ENCODE measurements at regions of chr10 and their contacts with region 1.

Region 1: GRCh38 chr10:124741281-124741921 is 2.8 kb downstream of the FAM53B start:
- DNase-seq: peak; percentile 66 to 87 (median 74)
- ATAC-seq: peak; percentile 58
- H3K4me3 ChIP-seq: peak overlapping the region; percentile 83
- H3K4me3 Mint-ChIP-seq: peak overlapping the region; percentile 99
- H3K27ac ChIP-seq: peak overlapping the region; percentile 51 to 60
- H3K27ac Mint-ChIP-seq: peak overlapping the region; percentile 88
- H3K4me1 ChIP-seq: peaks cover 69% of the 10 kb centered on the region
- H3K4me1 Mint-ChIP-seq: peaks cover 84% of the 10 kb centered on the region
- H3K27me3 ChIP-seq: no peaks in the 10 kb centered on the region
- H3K27me3 Mint-ChIP-seq: no peaks in the 10 kb centered on the region
- CTCF ChIP-seq: peak; percentile 93

Region 2: DNA sequence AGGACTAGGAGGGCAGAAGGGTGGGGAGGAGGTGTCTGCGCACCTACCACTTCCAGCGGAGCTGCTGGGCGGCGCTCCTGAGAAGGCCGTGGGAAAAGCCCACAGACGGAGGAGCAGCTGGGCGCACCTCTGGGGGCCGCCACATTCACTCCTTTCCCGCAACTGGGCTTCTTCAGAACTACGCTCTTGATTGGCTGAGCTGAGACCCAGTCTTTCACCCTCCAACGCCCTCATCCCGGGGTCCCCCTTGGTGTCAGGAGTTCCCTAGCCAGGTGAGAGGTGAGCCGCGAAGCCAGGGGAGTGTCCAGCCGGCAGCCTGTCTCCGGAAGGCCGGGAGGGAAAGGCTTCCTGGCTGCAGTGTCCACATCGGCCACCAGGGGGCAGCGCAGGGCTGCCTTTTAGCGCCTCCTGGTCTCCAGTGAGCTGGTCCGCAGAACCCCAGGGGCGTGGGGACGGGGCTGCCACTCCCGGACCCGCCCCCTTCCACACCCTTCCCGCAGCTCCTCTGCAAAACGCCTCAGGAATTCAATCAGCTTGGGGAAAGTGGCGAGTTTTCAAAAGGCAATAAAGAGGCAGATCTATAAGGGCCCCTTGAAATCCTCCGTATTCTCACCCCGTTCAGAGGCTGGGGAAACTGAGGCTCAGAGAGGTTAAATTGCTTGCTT is 746.9 kb before region 1 on chr10:
- CTCF ChIA-PET with region 1: no interaction called
- POLR2A ChIA-PET with region 1: no interaction called
- intact Hi-C with region 1: loop called (anchors 5 to 10 kb)
- DNase-seq: peak; percentile 62 to 88 (median 74)
- ATAC-seq: peak; percentile 87
- H3K4me3 ChIP-seq: peak overlapping the region; percentile 6
- H3K4me3 Mint-ChIP-seq: peak overlapping the region; percentile 38
- H3K27ac ChIP-seq: no peak overlapping the region
- H3K27ac Mint-ChIP-seq: no peak overlapping the region
- H3K4me1 ChIP-seq: peaks cover 17% of the 10 kb centered on the region
- H3K4me1 Mint-ChIP-seq: peaks cover 16% of the 10 kb centered on the region
- H3K27me3 ChIP-seq: peaks cover 27 to 49% of the 10 kb centered on the region in 2 experiments
- H3K27me3 Mint-ChIP-seq: peaks cover 82% of the 10 kb centered on the region
- CTCF ChIP-seq: peak; percentile 88

Region 3: GRCh38 chr10:124180947-124181549 is 560.4 kb before region 1 on chr10:
- CTCF ChIA-PET with region 1: no interaction called
- POLR2A ChIA-PET with region 1: no interaction called
- intact Hi-C with region 1: no loop called
- DNase-seq: peak in 1 of 14 experiments; percentile 25
- ATAC-seq: no peak
- H3K4me3 ChIP-seq: no peak overlapping the region
- H3K4me3 Mint-ChIP-seq: no peak overlapping the region
- H3K27ac ChIP-seq: no peak overlapping the region
- H3K27ac Mint-ChIP-seq: no peak overlapping the region
- H3K4me1 ChIP-seq: no peaks in the 10 kb centered on the region
- H3K4me1 Mint-ChIP-seq: peaks cover 1% of the 10 kb centered on the region
- H3K27me3 ChIP-seq: no peaks in the 10 kb centered on the region
- H3K27me3 Mint-ChIP-seq: no peaks in the 10 kb centered on the region
- CTCF ChIP-seq: no peak

Region 4: GRCh38 chr10:124530215-124530665 is 211.2 kb before region 1 on chr10:
- CTCF ChIA-PET with region 1: interaction called, 32 read pairs
- POLR2A ChIA-PET with region 1: interaction called, 13 read pairs
- intact Hi-C with region 1: loop called (anchors 1 kb)
- DNase-seq: peak; percentile 78 to 90 (median 84)
- ATAC-seq: peak; percentile 98
- H3K4me3 ChIP-seq: no peak overlapping the region
- H3K4me3 Mint-ChIP-seq: no peak overlapping the region
- H3K27ac ChIP-seq: no peak overlapping the region
- H3K27ac Mint-ChIP-seq: no peak overlapping the region
- H3K4me1 ChIP-seq: peaks cover 18% of the 10 kb centered on the region
- H3K4me1 Mint-ChIP-seq: peaks cover 9% of the 10 kb centered on the region
- H3K27me3 ChIP-seq: no peaks in the 10 kb centered on the region
- H3K27me3 Mint-ChIP-seq: no peaks in the 10 kb centered on the region
- CTCF ChIP-seq: peak; percentile 66

Region 5: GRCh38 chr10:124626759-124627380 is 114.5 kb before region 1 on chr10:
- CTCF ChIA-PET with region 1: interaction called, 20 read pairs
- POLR2A ChIA-PET with region 1: interaction called, 11 read pairs
- intact Hi-C with region 1: loop called in 1 of 2 experiments (anchors 2 kb)
- DNase-seq: peak in 13 of 14 experiments; percentile 25 to 77 (median 49)
- ATAC-seq: peak; percentile 89
- H3K4me3 ChIP-seq: no peak overlapping the region
- H3K4me3 Mint-ChIP-seq: peak overlapping the region; percentile 23
- H3K27ac ChIP-seq: peak overlapping the region; percentile 18 to 68
- H3K27ac Mint-ChIP-seq: peak overlapping the region; percentile 92
- H3K4me1 ChIP-seq: peaks cover 86% of the 10 kb centered on the region
- H3K4me1 Mint-ChIP-seq: peaks cover 49% of the 10 kb centered on the region
- H3K27me3 ChIP-seq: no peaks in the 10 kb centered on the region
- H3K27me3 Mint-ChIP-seq: no peaks in the 10 kb centered on the region
- CTCF ChIP-seq: peak; percentile 27

Region 6: DNA sequence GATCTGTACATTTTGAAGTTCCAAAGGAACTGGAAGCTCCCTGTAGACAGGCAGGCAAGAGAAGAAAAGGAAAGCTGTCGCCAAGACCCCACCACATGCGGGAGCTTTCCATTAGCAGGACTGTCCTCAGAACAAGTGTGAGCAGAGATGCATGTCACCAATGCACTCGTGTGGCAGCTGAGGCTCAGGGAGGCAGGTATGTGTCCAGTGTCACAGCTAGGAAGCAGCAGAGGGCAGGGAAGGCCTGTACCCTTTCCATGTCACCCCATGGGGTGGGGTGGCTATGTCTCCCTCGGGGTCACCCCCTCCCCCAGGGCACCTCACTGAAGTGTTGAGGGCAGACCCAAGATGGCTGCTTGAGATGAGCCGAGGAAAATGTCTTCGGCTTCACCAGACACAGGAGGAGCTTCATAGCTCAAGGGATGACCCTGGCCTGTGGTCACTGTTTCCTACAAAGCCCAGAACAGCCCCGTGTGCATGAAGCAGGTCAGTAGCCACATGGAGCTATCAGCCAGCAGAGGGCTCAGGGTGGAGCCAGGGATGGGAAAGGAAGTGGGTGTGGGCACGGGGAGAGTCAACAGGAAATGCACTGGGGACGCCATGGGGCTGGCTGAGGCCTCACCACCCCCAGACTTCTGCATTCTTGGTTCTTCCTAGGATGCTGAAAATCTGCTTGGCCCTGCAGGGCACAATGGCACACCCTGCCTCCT is 93.8 kb before region 1 on chr10:
- CTCF ChIA-PET with region 1: interaction called, 18 read pairs
- POLR2A ChIA-PET with region 1: interaction called, 50 read pairs
- intact Hi-C with region 1: loop called in 1 of 2 experiments (anchors 5 kb)
- DNase-seq: peak; percentile 50 to 91 (median 74)
- ATAC-seq: peak; percentile 78
- H3K4me3 ChIP-seq: peak overlapping the region; percentile 35
- H3K4me3 Mint-ChIP-seq: peak overlapping the region; percentile 79
- H3K27ac ChIP-seq: peak overlapping the region; percentile 72 to 78
- H3K27ac Mint-ChIP-seq: peak overlapping the region; percentile 89
- H3K4me1 ChIP-seq: peaks cover 100% of the 10 kb centered on the region
- H3K4me1 Mint-ChIP-seq: peaks cover 90% of the 10 kb centered on the region
- H3K27me3 ChIP-seq: no peaks in the 10 kb centered on the region
- H3K27me3 Mint-ChIP-seq: no peaks in the 10 kb centered on the region
- CTCF ChIP-seq: peak; percentile 64

Region 7: DNA sequence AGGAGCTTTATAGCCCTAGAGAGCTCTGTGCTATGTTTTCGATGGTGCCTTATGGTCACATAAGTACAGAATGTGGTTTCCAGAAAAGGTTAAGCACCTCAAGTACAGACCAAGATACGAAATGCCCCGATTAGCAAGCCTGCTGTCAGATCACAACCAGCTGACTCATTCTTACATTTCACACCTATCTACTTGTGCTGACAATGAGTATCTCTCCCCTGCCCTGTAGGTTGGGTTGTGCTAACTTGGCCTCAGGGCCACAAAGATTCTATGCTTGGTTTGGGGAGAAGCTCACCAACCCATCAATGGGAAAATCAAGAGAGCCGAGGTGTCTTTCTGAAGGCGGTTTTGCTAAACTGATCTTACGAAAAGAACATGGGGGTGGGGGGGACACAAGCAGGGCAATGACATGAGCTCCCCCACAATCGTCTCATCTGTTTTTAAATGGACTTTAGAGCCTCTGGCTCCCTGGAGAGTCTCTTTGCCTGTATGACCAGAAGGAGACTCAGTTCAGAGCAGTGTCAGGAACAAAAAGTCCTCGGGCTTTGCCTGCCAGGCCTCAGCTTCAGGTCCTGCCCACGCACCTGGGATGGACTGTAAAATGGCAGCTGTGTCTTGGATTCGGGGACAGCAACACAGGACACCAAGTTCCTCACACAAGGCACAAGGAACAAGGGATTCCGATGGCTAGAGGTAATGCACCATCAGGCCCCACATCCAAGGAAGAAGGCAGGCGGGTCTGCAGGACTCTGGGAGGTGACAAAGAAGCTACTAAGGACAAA is 52.3 kb before region 1 on chr10:
- CTCF ChIA-PET with region 1: interaction called, 19 read pairs
- POLR2A ChIA-PET with region 1: interaction called, 3 read pairs
- intact Hi-C with region 1: no loop called
- DNase-seq: peak in 7 of 14 experiments; percentile 23 to 82 (median 58)
- ATAC-seq: peak; percentile 72
- H3K4me3 ChIP-seq: no peak overlapping the region
- H3K4me3 Mint-ChIP-seq: peak overlapping the region; percentile 17
- H3K27ac ChIP-seq: peak overlapping the region in 1 of 2 donors; percentile 32
- H3K27ac Mint-ChIP-seq: peak overlapping the region; percentile 78
- H3K4me1 ChIP-seq: peaks cover 85% of the 10 kb centered on the region
- H3K4me1 Mint-ChIP-seq: peaks cover 73% of the 10 kb centered on the region
- H3K27me3 ChIP-seq: no peaks in the 10 kb centered on the region
- H3K27me3 Mint-ChIP-seq: no peaks in the 10 kb centered on the region
- CTCF ChIP-seq: no peak

Region 8: GRCh38 chr10:124719213-124719851 is 22.1 kb before region 1 on chr10:
- CTCF ChIA-PET with region 1: interaction called, 253 read pairs
- POLR2A ChIA-PET with region 1: interaction called, 66 read pairs
- intact Hi-C with region 1: loop called in 1 of 2 experiments (anchors 1 kb)
- DNase-seq: peak; percentile 53 to 90 (median 66)
- ATAC-seq: peak; percentile 54
- H3K4me3 ChIP-seq: peak overlapping the region; percentile 29
- H3K4me3 Mint-ChIP-seq: peak overlapping the region; percentile 36
- H3K27ac ChIP-seq: peak overlapping the region; percentile 93 to 95
- H3K27ac Mint-ChIP-seq: peak overlapping the region; percentile 86
- H3K4me1 ChIP-seq: peaks cover 98% of the 10 kb centered on the region
- H3K4me1 Mint-ChIP-seq: peaks cover 92% of the 10 kb centered on the region
- H3K27me3 ChIP-seq: no peaks in the 10 kb centered on the region
- H3K27me3 Mint-ChIP-seq: no peaks in the 10 kb centered on the region
- CTCF ChIP-seq: peak; percentile 68

Measured in CD4-positive, alpha-beta T cell (primary cell).